ENCODE measurements at regions of chr10 and their contacts with region 1.

Region 1: GRCh38 chr10:987870-988666 is at the start of gene GTPBP4:
- DNase-seq: peak; percentile 99
- total RNA-seq, gene GTPBP4: 33.1 TPM

Region 2: GRCh38 chr10:865257-865656 is 122.8 kb before region 1 on chr10:
- intact Hi-C with region 1: loop called (anchors 10 kb)
- DNase-seq: no peak

Region 3: DNA sequence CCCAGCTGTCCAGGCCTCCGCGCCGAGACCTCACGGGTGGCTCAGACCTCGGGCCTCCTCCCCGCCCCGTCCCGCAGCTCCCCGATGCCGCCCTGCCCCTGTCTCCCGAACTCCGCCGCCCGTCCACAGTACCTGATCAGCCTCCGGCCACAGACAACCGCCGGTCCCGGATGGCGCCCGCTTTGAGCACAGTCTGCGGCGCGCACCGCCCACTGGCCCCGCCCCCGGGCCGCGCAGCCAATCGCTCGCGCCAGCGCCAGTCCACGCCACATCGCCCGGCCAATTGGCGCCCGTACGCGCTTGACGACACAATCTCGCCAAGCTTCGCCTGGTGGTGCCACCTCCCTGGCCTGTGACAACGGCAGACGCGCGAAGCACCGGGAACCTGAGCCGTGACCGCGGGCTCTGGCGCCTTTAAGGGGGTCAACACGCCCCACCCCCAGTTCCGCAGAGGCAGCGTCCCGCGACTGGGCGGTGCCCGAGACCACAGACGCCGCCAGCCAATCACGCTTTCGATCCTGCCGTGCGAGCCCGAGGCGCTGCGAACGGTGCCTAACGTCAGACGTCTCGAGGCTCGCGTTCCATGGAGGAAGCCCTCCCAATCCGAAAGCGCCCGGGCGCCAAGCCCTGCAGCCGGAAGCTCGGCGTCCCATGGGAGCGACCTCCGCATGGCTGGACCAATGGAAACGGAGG is 60.8 kb after region 1 on chr10 and contains the start of gene IDI1:
- intact Hi-C with region 1: loop called (anchors 2 kb)
- DNase-seq: peak; percentile 98
- total RNA-seq, gene IDI1: 28.9 TPM

Region 4: GRCh38 chr10:1240341-1240775 is 252.3 kb after region 1 on chr10:
- intact Hi-C with region 1: no loop called
- DNase-seq: no peak

Measured in cardiac septum (tissue), 1 donor.